Breast epithelium (tissue), 4 donors: ENCODE measurements at regions of chr5 and their contacts with region 1.

Region 1: DNA sequence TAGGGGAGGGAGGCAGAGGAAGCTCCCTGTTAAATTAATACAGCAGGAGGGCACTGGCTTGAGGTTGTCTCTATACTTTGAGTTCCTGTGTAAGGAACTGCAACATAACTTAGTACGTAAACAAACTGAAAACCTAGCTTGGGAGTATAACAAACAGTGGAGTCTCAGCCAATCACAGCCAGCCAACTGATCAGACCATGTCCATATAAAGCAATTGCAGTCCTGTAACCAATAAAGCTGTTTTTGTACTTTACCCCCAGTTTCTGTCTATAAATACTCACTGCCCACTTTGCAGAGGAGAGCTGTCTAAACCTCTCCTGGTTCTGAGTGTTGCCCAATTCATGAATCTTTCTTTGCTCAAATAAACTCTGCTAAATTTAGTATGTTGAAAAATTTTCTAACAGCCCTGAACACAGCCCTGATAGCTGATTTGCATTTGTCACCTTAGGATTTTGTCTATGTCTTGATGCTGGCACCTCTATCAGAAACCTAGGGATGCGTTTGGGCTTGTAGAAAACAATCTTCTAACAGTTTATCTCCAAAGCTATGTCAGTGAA is 39.9 kb downstream of the GDNF start:
- DNase-seq: no peak
- H3K4me3 ChIP-seq: no peak overlapping the region
- H3K27ac ChIP-seq: no peak overlapping the region
- H3K4me1 ChIP-seq: no peaks in the 10 kb centered on the region
- H3K27me3 ChIP-seq: no peaks in the 10 kb centered on the region
- CTCF ChIP-seq: no peak
- POLR2A ChIP-seq: no peak

Region 2: DNA sequence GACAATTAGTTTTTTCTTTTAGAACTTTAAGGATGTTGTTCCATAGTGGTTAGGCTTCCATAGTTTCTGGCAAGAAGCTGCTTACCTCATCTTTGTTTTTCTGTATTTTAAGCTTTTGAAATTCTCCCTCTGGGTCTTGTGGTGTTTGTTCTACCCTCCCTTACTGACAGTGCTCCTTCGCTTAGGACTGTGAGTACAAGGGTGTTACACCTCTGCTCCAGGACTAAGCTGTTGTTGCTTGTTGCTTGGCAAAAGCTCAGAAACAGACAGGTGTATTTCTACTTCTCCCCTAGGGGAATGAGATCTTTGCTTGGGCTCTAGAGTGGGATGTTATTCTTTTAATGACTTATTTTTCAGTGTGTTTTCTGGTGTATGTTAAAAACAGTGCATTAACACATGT is 195.7 kb before region 1 on chr5:
- intact Hi-C with region 1: no loop called
- DNase-seq: no peak
- H3K4me3 ChIP-seq: no peak overlapping the region
- H3K27ac ChIP-seq: no peak overlapping the region
- H3K4me1 ChIP-seq: no peaks in the 10 kb centered on the region
- H3K27me3 ChIP-seq: no peaks in the 10 kb centered on the region
- CTCF ChIP-seq: no peak
- POLR2A ChIP-seq: no peak

Region 3: DNA sequence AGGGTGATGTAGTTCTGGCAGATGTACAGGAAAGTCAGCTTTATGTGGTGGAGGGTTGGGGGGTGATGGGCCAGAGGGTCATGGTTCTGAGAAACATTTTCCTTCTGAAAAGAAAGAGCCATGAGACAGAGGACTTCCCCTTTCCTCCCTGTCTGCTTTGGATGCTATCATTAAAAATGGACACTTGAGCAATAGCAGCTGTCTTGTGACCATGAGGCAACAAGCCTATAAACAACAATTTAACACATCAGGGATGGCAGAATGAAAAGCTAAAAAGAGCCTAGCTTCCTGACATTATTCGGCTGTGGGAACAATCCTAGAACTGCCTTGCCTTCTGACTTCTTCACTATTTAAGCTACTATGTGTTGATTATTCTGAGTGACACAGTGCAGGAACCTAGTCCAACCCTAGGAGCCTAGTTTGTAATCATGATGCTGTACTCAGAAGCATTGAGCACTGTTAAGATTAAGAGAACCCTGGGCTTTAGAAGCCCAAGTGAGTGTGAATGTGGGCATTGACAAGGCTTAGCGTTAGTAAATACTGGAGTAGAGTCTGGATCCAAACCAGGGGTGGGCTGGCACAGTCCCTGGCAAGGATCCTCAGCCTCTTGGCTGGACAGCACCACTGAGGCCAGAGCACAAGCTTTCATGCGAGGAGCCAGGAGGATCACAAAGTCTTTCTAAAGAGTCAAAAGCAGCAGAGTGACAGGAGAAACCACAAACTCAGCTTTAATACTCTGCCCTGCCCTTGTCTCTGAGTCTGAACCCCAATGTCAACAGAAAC is 279.9 kb after region 1 on chr5:
- intact Hi-C with region 1: loop called (anchors 5 kb)
- DNase-seq: no peak
- H3K4me3 ChIP-seq: no peak overlapping the region
- H3K27ac ChIP-seq: no peak overlapping the region
- H3K4me1 ChIP-seq: no peaks in the 10 kb centered on the region
- H3K27me3 ChIP-seq: no peaks in the 10 kb centered on the region
- CTCF ChIP-seq: no peak
- POLR2A ChIP-seq: no peak